Calu3 (cell line): ENCODE measurements at regions of chr3 and their contacts with region 1.

Region 1: GRCh38 chr3:85342915-85343314 is 384.1 kb downstream of the CADM2 start:
- DNase-seq: peak; percentile 32
- H3K4me3 Mint-ChIP-seq: no peak overlapping the region
- H3K27ac Mint-ChIP-seq: no peak overlapping the region
- H3K4me1 Mint-ChIP-seq: no peaks in the 10 kb centered on the region
- H3K27me3 Mint-ChIP-seq: no peaks in the 10 kb centered on the region
- CTCF ChIP-seq: peak; percentile 31

Region 2: DNA sequence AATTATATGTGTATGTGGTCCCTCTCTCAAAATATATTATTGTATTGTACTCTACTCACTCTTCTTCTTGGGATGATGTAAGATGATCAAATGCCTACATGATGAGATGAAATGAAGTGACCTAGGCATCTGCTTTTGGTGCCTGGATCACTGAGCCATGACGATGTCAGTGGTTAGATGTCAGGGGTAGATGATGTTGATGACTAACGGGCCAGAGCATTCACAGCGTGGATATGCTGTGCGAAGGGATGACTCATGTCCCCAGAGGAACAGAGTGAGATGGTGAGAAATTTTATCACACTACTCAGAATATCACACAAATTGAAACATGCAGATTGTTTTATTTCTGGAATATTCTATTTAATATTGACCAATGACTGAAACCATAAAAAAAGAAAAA is 618.0 kb before region 1 on chr3:
- CTCF ChIA-PET with region 1: no interaction called
- intact Hi-C with region 1: loop called (anchors 5 kb)
- DNase-seq: no peak
- H3K4me3 Mint-ChIP-seq: no peak overlapping the region
- H3K27ac Mint-ChIP-seq: no peak overlapping the region
- H3K4me1 Mint-ChIP-seq: no peaks in the 10 kb centered on the region
- H3K27me3 Mint-ChIP-seq: no peaks in the 10 kb centered on the region
- CTCF ChIP-seq: no peak

Region 3: DNA sequence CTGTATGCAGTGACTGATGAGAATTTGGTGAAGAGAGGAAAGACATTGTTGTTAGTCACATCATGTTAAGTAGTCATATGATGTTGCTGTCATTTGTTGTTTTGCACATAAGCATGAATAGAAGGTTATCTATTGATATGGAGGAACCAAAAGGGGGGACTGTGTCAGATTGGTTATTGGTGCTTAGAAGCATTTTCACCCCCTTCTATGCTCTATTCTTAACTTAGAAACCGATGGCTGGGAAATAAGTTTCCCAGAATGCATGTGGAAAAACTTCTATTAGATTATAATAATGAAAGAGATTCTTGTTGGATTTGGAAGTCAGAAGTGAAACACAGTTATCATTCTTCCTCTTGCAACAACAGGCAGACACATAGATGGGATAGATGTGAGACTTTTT is 417.3 kb before region 1 on chr3:
- CTCF ChIA-PET with region 1: no interaction called
- intact Hi-C with region 1: no loop called
- DNase-seq: no peak
- H3K4me3 Mint-ChIP-seq: no peak overlapping the region
- H3K27ac Mint-ChIP-seq: no peak overlapping the region
- H3K4me1 Mint-ChIP-seq: no peaks in the 10 kb centered on the region
- H3K27me3 Mint-ChIP-seq: no peaks in the 10 kb centered on the region
- CTCF ChIP-seq: no peak

Region 4: DNA sequence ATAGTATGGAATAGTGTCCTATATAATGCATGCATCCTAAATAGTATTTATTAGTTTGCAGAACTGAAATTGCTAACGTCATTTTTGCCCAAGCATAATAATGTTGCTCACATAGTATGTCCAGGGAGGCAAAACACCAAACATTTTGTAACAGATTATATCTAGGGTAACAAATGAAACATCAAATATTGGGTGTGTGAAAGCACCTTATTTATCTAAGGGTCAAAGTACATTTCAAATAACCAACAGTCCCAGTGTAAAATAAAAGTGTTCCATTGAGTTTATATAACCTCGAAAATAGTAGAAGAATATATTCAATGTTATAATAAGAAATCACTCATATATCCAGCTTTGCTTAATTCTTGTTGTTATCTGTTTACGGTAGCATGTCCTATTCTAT is 21.0 kb before region 1 on chr3:
- CTCF ChIA-PET with region 1: no interaction called
- intact Hi-C with region 1: no loop called
- DNase-seq: no peak
- H3K4me3 Mint-ChIP-seq: no peak overlapping the region
- H3K27ac Mint-ChIP-seq: no peak overlapping the region
- H3K4me1 Mint-ChIP-seq: no peaks in the 10 kb centered on the region
- H3K27me3 Mint-ChIP-seq: no peaks in the 10 kb centered on the region
- CTCF ChIP-seq: no peak